ENCODE measurements at regions of chr2 and their contacts with region 1.

Region 1: GRCh38 chr2:196171248-196171871 is at the start of gene STK17B:
- DNase-seq: peak; percentile 92
- ATAC-seq: peak; percentile 94 to 95
- H3K4me3 ChIP-seq: peak within 1 kb of the TSS; percentile 74 to 97 (median 89)
- H3K27ac ChIP-seq: peak within 1 kb of the TSS; percentile 77 to 92 (median 86)
- H3K4me1 ChIP-seq: peaks cover 13 to 22% of the 10 kb centered on the region in 2 donors
- H3K27me3 ChIP-seq: no peaks in the 10 kb centered on the region
- CTCF ChIP-seq: no peak
- POLR2A ChIP-seq: peak; percentile 71 to 87
- total RNA-seq, gene STK17B: 4.4 to 11.5 (median 8.8) TPM

Region 2: GRCh38 chr2:195656859-195657633 is 514.3 kb before region 1 on chr2 and contains the start of gene SLC39A10:
- in situ Hi-C with region 1: no loop called
- intact Hi-C with region 1: loop called (anchors 10 kb)
- DNase-seq: peak; percentile 93 to 94
- ATAC-seq: peak; percentile 91 to 94
- H3K4me3 ChIP-seq: peak within 1 kb of the TSS; percentile 80 to 94 (median 88)
- H3K27ac ChIP-seq: peak within 1 kb of the TSS; percentile 92 to 97 (median 96)
- H3K4me1 ChIP-seq: peaks cover 23% of the 10 kb centered on the region in 2 donors
- H3K27me3 ChIP-seq: no peaks in the 10 kb centered on the region
- CTCF ChIP-seq: peak in 1 of 5 experiments; percentile 33
- POLR2A ChIP-seq: peak; percentile 92 to 95
- total RNA-seq, gene SLC39A10: 1.6 to 3.5 (median 2.1) TPM

Region 3: GRCh38 chr2:196113061-196113974 is 58.0 kb before region 1 on chr2:
- in situ Hi-C with region 1: no loop called
- intact Hi-C with region 1: loop called (anchors 5 kb)
- DNase-seq: peak in 1 of 2 donors; percentile 15
- ATAC-seq: peak; percentile 75 to 80
- H3K4me3 ChIP-seq: peak overlapping the region in 2 of 4 donors; percentile 11 to 21
- H3K27ac ChIP-seq: peak overlapping the region; percentile 49 to 66 (median 54)
- H3K4me1 ChIP-seq: peaks cover 35 to 37% of the 10 kb centered on the region in 2 donors
- H3K27me3 ChIP-seq: no peaks in the 10 kb centered on the region
- CTCF ChIP-seq: no peak
- POLR2A ChIP-seq: no peak

Region 4: DNA sequence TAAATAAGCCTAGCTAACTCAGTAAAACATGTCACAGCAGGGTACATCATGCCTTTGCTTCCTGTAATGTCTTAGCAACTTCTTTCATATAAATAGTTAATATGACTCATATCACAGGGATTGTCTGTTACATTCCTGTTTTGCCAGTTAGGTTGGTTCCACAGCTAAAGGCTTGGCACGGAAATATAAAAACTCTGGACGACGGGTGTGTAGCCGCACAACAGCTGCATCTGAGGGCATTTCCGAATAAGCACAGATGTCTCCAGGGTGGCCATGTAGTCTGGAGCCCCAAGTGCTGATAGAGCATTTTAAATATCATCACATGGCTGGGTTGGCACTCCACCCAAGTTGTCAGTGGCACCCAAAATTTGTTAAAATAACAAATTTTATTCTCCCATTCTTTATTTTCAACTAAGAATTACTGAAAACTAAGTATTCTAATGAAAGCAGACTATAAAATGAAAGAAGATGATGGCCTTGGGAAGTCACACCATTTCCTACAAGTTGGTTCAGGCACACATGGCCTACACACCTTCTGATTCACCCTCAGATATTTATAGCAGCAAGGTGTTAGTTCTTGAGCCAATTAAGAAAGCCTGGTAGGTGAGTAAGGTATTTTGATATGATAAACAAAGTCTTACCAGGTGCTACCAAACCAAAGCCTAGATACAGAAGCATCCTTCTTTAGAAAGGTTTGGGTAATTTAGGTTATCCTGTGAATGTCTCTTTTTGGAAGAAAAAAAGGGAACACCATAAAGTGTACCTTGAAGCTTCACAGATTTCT is 61.9 kb after region 1 on chr2:
- in situ Hi-C with region 1: no loop called
- intact Hi-C with region 1: loop called (anchors 5 kb)
- DNase-seq: peak in 1 of 2 donors; percentile 31
- ATAC-seq: peak; percentile 74 to 77
- H3K4me3 ChIP-seq: no peak overlapping the region
- H3K27ac ChIP-seq: peak overlapping the region in 3 of 4 donors; percentile 15 to 56 (median 39)
- H3K4me1 ChIP-seq: peaks cover 11 to 23% of the 10 kb centered on the region in 2 donors
- H3K27me3 ChIP-seq: no peaks in the 10 kb centered on the region
- CTCF ChIP-seq: no peak
- POLR2A ChIP-seq: no peak

Region 5: GRCh38 chr2:196468394-196468793 is 297.0 kb after region 1 on chr2:
- in situ Hi-C with region 1: no loop called
- intact Hi-C with region 1: no loop called
- DNase-seq: no peak
- ATAC-seq: no peak
- H3K4me3 ChIP-seq: no peak overlapping the region
- H3K27ac ChIP-seq: no peak overlapping the region
- H3K4me1 ChIP-seq: no peaks in the 10 kb centered on the region
- H3K27me3 ChIP-seq: no peaks in the 10 kb centered on the region
- CTCF ChIP-seq: no peak
- POLR2A ChIP-seq: no peak

Region 6: DNA sequence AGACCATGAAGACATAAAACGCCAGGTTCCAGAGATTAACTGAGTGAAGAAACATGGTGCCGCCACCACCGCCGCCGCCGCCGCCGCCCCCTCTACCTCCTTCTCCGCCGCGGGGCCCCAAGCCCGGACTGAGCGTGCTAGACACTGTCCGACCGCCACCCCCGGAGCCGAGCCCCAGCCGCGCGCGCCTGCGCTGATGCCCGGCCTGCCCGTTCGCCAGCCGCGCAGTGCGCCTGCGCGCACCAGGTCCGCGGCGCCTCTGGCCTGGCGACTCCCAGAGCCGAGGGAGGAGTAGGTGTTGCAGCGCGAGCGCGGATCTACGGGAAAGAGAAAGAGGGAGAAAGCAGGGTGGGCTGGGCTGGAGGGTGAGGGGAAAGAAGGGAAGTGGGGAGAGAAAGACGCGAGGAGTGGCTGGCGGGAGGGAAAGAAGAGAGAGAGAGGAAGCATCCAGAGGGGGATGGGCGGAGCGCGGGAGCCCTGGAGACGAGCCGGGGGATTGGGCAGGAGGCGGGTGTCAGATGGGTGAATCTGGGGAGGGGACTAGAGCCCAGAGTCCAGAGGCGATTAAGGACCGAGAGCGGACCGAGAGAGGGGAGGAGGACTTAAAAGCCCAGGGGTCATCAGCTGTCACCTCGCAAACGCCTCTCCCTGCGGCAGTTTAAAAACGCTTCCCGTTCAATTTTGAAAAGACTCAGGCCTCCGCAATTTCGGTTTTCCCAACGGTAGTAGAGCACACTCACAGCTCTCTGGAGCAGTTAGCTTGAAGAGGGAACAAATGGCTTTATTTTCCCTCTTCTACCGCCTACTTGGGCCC is 755.4 kb after region 1 on chr2 and contains the start of gene PGAP1:
- in situ Hi-C with region 1: no loop called
- intact Hi-C with region 1: loop called (anchors 10 kb)
- DNase-seq: peak; percentile 65 to 81
- ATAC-seq: peak; percentile 90 to 91
- H3K4me3 ChIP-seq: peak within 1 kb of the TSS; percentile 78 to 90 (median 84)
- H3K27ac ChIP-seq: peak within 1 kb of the TSS; percentile 82 to 91 (median 84)
- H3K4me1 ChIP-seq: peaks cover 0 to 16% of the 10 kb centered on the region in 2 donors
- H3K27me3 ChIP-seq: no peaks in the 10 kb centered on the region
- CTCF ChIP-seq: no peak
- POLR2A ChIP-seq: peak; percentile 62 to 77
- total RNA-seq, gene PGAP1: 1.3 to 3.7 (median 1.8) TPM